B cell (primary cell): ENCODE measurements at regions of chr1 and their contacts with region 1.

Region 1: GRCh38 chr1:116377541-116378529 is 4.8 kb downstream of the ATP1A1 start:
- DNase-seq: peak; percentile 73
- ATAC-seq: peak; percentile 40
- H3K4me3 ChIP-seq: peak overlapping the region in 4 of 5 experiments; percentile 0 to 43 (median 29)
- H3K4me3 Mint-ChIP-seq: peak overlapping the region; percentile 83
- H3K27ac ChIP-seq: peak overlapping the region; percentile 67 to 75
- H3K27ac Mint-ChIP-seq: peak overlapping the region; percentile 94
- H3K4me1 ChIP-seq: peaks cover 48 to 58% of the 10 kb centered on the region in 2 donors
- H3K4me1 Mint-ChIP-seq: peaks cover 78% of the 10 kb centered on the region
- H3K27me3 ChIP-seq: no peaks in the 10 kb centered on the region
- H3K27me3 Mint-ChIP-seq: no peaks in the 10 kb centered on the region
- CTCF ChIP-seq: no peak

Region 2: GRCh38 chr1:116151739-116152576 is 225.9 kb before region 1 on chr1:
- CTCF ChIA-PET with region 1: no interaction called
- POLR2A ChIA-PET with region 1: no interaction called
- intact Hi-C with region 1: loop called (anchors 5 kb)
- DNase-seq: peak; percentile 86
- ATAC-seq: peak; percentile 98
- H3K4me3 ChIP-seq: peak overlapping the region in 4 of 5 experiments; percentile 17 to 44 (median 41)
- H3K4me3 Mint-ChIP-seq: peak overlapping the region; percentile 65
- H3K27ac ChIP-seq: no peak overlapping the region
- H3K27ac Mint-ChIP-seq: no peak overlapping the region
- H3K4me1 ChIP-seq: peaks cover 7 to 11% of the 10 kb centered on the region in 2 donors
- H3K4me1 Mint-ChIP-seq: peaks cover 8% of the 10 kb centered on the region
- H3K27me3 ChIP-seq: no peaks in the 10 kb centered on the region
- H3K27me3 Mint-ChIP-seq: peaks cover 15% of the 10 kb centered on the region
- CTCF ChIP-seq: peak; percentile 90